CD8-positive, alpha-beta T cell (primary cell): ENCODE measurements at regions of chr14 and their contacts with region 1.

Region 1: GRCh38 chr14:56339855-56340701 is 221.9 kb downstream of the PELI2 start:
- DNase-seq: peak; percentile 18 to 67 (median 53)
- ATAC-seq: peak; percentile 58
- H3K4me3 ChIP-seq: no peak overlapping the region
- H3K4me3 Mint-ChIP-seq: no peak overlapping the region
- H3K27ac ChIP-seq: no peak overlapping the region
- H3K27ac Mint-ChIP-seq: no peak overlapping the region
- H3K4me1 ChIP-seq: no peaks in the 10 kb centered on the region
- H3K4me1 Mint-ChIP-seq: peaks cover 3% of the 10 kb centered on the region
- H3K27me3 ChIP-seq: no peaks in the 10 kb centered on the region
- H3K27me3 Mint-ChIP-seq: no peaks in the 10 kb centered on the region
- CTCF ChIP-seq: peak; percentile 52

Region 2: DNA sequence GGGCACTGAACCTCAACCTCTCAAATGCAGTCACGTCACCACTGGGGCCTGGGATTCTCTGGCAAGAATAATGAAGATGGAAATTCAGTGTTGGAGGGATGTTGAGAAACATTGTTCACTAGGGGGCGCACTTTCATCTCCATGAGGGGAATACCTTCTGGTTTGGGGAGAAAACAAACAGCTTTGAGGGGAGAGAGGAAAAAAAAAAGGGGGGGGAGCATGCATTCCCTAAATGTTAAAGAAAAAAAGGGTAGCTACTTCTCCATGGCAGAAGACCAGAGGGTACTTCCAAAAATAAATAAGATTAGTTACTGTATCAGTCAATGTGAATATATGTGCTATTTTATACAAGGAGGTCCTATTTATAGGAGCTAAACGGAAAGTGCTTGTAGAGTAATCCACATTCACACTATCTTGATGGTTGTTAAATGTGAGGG is 893.8 kb before region 1 on chr14:
- CTCF ChIA-PET with region 1: interaction called, 3 read pairs
- POLR2A ChIA-PET with region 1: no interaction called
- intact Hi-C with region 1: loop called in 1 of 2 experiments (anchors 5 kb)
- DNase-seq: peak; percentile 3 to 72 (median 53)
- ATAC-seq: no peak
- H3K4me3 ChIP-seq: no peak overlapping the region
- H3K4me3 Mint-ChIP-seq: no peak overlapping the region
- H3K27ac ChIP-seq: no peak overlapping the region
- H3K27ac Mint-ChIP-seq: no peak overlapping the region
- H3K4me1 ChIP-seq: no peaks in the 10 kb centered on the region
- H3K4me1 Mint-ChIP-seq: peaks cover 3% of the 10 kb centered on the region
- H3K27me3 ChIP-seq: no peaks in the 10 kb centered on the region
- H3K27me3 Mint-ChIP-seq: peaks cover 3% of the 10 kb centered on the region
- CTCF ChIP-seq: peak; percentile 80

Region 3: DNA sequence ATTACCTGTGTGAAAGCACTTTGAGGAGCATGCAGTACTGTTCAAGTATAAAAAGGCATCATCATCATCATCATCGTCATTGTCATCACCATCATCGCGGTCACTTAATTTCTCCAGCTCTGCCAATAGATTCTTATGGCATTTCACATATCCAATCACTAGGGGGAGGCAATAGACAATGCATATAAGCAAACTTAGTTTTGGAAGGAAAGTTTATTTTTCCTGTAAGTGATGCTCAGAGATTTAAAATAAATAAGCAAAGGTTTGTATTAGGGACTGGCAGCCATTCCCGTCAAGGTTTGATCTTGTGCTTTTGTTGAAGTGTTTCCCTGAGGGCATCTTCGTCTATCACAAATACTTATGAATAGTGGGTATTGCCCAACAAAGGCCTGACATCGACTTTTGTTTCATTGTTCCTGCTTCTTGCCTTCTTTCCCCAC is 632.7 kb before region 1 on chr14:
- CTCF ChIA-PET with region 1: interaction called, 8 read pairs
- POLR2A ChIA-PET with region 1: no interaction called
- intact Hi-C with region 1: loop called in 1 of 2 experiments (anchors 1 kb)
- DNase-seq: peak in 2 of 9 experiments; percentile 25 to 30
- ATAC-seq: no peak
- H3K4me3 ChIP-seq: no peak overlapping the region
- H3K4me3 Mint-ChIP-seq: no peak overlapping the region
- H3K27ac ChIP-seq: no peak overlapping the region
- H3K27ac Mint-ChIP-seq: no peak overlapping the region
- H3K4me1 ChIP-seq: no peaks in the 10 kb centered on the region
- H3K4me1 Mint-ChIP-seq: no peaks in the 10 kb centered on the region
- H3K27me3 ChIP-seq: no peaks in the 10 kb centered on the region
- H3K27me3 Mint-ChIP-seq: no peaks in the 10 kb centered on the region
- CTCF ChIP-seq: no peak

Region 4: DNA sequence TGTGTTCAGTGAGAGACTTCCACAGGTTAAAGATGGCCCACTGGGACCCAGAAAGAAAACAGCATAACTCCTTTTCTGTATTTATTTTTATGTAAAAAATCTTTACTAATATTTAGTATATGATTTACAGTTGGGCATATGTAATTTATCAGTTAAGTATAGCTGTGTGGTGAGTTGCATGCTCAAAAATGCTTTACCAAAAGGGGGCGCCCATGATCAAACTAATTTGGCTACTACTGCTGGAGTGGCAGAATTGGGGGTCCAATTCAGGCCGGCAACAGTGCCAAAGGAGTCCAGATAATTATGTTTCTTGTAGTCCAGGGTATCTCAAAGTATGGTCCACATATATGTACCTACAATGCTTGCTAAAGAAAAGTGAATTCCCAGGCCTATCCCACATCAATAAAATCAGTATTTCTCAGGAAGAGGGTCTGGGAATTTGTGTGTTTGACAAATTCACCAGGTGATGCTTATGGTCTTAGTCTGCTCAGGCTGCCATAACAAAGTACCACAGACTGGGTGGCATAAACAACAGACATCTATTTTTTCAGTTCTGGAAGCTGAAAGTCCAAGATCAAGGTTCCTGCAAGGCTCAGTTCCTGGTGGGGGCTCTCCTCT is 608.1 kb before region 1 on chr14:
- CTCF ChIA-PET with region 1: interaction called, 35 read pairs
- POLR2A ChIA-PET with region 1: interaction called, 3 read pairs
- intact Hi-C with region 1: loop called in 1 of 2 experiments (anchors 1 kb)
- DNase-seq: peak; percentile 18 to 61 (median 56)
- ATAC-seq: no peak
- H3K4me3 ChIP-seq: no peak overlapping the region
- H3K4me3 Mint-ChIP-seq: no peak overlapping the region
- H3K27ac ChIP-seq: no peak overlapping the region
- H3K27ac Mint-ChIP-seq: no peak overlapping the region
- H3K4me1 ChIP-seq: no peaks in the 10 kb centered on the region
- H3K4me1 Mint-ChIP-seq: no peaks in the 10 kb centered on the region
- H3K27me3 ChIP-seq: no peaks in the 10 kb centered on the region
- H3K27me3 Mint-ChIP-seq: no peaks in the 10 kb centered on the region
- CTCF ChIP-seq: peak; percentile 65

Region 5: DNA sequence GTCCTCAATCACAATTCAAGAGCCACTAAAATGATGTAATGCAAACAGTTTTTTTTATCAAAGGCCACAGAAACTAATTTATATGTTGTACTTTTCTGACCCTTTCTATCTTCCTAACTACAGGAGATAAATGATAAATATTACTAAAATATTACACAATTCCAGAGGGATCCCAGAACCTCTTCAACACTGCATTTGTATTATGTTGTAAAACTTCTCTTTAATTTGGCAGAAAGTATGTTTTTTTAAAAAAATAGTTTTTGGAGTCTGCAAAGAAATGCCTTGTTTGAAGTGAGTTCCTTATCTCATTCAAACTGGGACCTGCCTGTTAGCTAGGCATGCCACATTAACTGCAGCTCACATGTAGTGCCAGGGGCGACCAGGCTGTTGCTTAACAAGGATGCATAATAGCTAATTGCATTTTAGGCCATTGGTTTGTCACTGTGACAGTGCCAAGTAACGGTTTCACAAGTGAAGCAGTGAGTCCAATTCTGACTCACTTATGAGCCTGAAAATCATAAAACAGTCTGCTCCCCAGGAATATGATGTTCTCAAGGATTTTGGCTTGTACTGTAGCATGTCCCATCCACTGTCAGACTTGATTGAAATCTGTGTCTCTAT is 493.1 kb before region 1 on chr14:
- CTCF ChIA-PET with region 1: no interaction called
- POLR2A ChIA-PET with region 1: no interaction called
- intact Hi-C with region 1: loop called in 1 of 2 experiments (anchors 5 kb)
- DNase-seq: no peak
- ATAC-seq: no peak
- H3K4me3 ChIP-seq: no peak overlapping the region
- H3K4me3 Mint-ChIP-seq: no peak overlapping the region
- H3K27ac ChIP-seq: no peak overlapping the region
- H3K27ac Mint-ChIP-seq: no peak overlapping the region
- H3K4me1 ChIP-seq: no peaks in the 10 kb centered on the region
- H3K4me1 Mint-ChIP-seq: no peaks in the 10 kb centered on the region
- H3K27me3 ChIP-seq: no peaks in the 10 kb centered on the region
- H3K27me3 Mint-ChIP-seq: no peaks in the 10 kb centered on the region
- CTCF ChIP-seq: no peak